ENCODE measurements at regions of chrX and their contacts with region 1.

Region 1: GRCh38 chrX:17944833-17945497 is 83.9 kb upstream of the RAI2 start:
- DNase-seq: no peak
- ATAC-seq: no peak
- H3K4me3 Mint-ChIP-seq: no peak overlapping the region
- H3K27ac Mint-ChIP-seq: no peak overlapping the region
- H3K4me1 Mint-ChIP-seq: no peaks in the 10 kb centered on the region
- H3K27me3 Mint-ChIP-seq: no peaks in the 10 kb centered on the region
- CTCF ChIP-seq: no peak

Region 2: DNA sequence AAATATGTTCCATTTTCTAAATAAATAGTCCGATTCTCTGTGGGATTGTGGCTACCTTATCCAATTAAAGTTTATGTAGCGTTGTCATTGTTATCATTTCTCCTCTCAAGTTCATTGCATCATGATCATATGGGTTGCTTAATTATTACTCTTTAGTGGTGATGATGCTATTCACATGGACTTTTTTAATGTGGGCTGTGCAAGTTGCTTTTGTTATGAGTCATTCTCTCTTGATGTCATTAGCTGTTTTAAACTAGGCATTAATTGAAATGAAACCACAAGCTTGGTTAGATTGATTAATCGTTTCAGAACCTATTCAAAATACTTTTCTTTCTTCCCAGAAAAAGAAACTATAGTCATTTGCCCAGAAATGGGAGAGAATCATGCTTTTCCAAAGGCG is 531.7 kb before region 1 on chrX:
- CTCF ChIA-PET with region 1: no interaction called
- POLR2A ChIA-PET with region 1: no interaction called
- intact Hi-C with region 1: no loop called
- DNase-seq: no peak
- ATAC-seq: no peak
- H3K4me3 Mint-ChIP-seq: no peak overlapping the region
- H3K27ac Mint-ChIP-seq: no peak overlapping the region
- H3K4me1 Mint-ChIP-seq: no peaks in the 10 kb centered on the region
- H3K27me3 Mint-ChIP-seq: no peaks in the 10 kb centered on the region
- CTCF ChIP-seq: no peak

Region 3: DNA sequence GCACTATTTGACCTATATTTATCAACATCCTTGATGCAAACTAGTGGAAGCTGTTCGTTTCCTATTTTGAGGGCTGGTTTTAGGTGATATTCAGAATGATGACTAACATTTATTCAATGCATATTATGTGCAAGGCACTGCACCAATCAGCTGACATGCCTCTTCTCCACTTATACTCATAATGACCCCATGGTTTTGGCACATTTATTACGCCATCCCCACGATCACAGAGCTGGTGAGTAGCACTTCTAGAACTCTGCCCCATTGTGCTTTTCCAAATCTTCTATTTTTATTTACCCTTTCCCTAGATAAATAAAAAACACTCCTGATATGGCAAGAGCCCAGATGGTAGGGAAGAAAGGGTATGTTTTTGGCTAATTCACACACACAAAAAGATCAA is 194.5 kb before region 1 on chrX:
- CTCF ChIA-PET with region 1: no interaction called
- POLR2A ChIA-PET with region 1: no interaction called
- intact Hi-C with region 1: no loop called
- DNase-seq: no peak
- ATAC-seq: no peak
- H3K4me3 Mint-ChIP-seq: no peak overlapping the region
- H3K27ac Mint-ChIP-seq: no peak overlapping the region
- H3K4me1 Mint-ChIP-seq: no peaks in the 10 kb centered on the region
- H3K27me3 Mint-ChIP-seq: no peaks in the 10 kb centered on the region
- CTCF ChIP-seq: no peak

Region 4: DNA sequence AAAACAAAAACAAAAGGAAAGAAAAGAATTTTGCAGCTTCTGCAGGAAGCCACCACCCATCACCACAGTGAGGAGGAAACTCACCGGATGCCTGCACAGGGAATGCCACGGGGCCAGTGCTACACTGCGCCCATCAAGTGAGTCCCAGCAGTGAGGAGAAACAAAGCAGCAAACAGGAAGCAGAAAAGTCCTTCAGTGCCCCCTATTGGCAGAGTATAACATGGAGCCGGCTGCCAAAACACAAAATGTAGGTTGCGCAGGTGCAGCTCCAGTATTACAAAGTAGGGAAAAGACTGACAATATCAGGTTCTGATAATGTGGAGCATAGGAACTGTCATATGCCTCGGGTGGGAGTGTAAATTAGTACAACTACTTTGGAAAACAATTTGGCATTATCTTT is 432.8 kb after region 1 on chrX:
- CTCF ChIA-PET with region 1: interaction called, 3 read pairs
- POLR2A ChIA-PET with region 1: no interaction called
- intact Hi-C with region 1: loop called (anchors 5 kb)
- DNase-seq: no peak
- ATAC-seq: peak; percentile 25
- H3K4me3 Mint-ChIP-seq: no peak overlapping the region
- H3K27ac Mint-ChIP-seq: no peak overlapping the region
- H3K4me1 Mint-ChIP-seq: peaks cover 4% of the 10 kb centered on the region
- H3K27me3 Mint-ChIP-seq: no peaks in the 10 kb centered on the region
- CTCF ChIP-seq: no peak